ENCODE measurements at regions of chr2 and their contacts with region 1.

Region 1: GRCh38 chr2:182729710-182730339 is 13.8 kb downstream of the DNAJC10 start:
- DNase-seq: no peak
- ATAC-seq: no peak
- H3K4me3 ChIP-seq: no peak overlapping the region
- H3K4me3 Mint-ChIP-seq: no peak overlapping the region
- H3K27ac ChIP-seq: no peak overlapping the region
- H3K27ac Mint-ChIP-seq: no peak overlapping the region
- H3K4me1 ChIP-seq: no peaks in the 10 kb centered on the region
- H3K4me1 Mint-ChIP-seq: peaks cover 2 to 13% (median 2%) of the 10 kb centered on the region in 3 donors
- H3K27me3 ChIP-seq: no peaks in the 10 kb centered on the region
- H3K27me3 Mint-ChIP-seq: no peaks in the 10 kb centered on the region

Region 2: DNA sequence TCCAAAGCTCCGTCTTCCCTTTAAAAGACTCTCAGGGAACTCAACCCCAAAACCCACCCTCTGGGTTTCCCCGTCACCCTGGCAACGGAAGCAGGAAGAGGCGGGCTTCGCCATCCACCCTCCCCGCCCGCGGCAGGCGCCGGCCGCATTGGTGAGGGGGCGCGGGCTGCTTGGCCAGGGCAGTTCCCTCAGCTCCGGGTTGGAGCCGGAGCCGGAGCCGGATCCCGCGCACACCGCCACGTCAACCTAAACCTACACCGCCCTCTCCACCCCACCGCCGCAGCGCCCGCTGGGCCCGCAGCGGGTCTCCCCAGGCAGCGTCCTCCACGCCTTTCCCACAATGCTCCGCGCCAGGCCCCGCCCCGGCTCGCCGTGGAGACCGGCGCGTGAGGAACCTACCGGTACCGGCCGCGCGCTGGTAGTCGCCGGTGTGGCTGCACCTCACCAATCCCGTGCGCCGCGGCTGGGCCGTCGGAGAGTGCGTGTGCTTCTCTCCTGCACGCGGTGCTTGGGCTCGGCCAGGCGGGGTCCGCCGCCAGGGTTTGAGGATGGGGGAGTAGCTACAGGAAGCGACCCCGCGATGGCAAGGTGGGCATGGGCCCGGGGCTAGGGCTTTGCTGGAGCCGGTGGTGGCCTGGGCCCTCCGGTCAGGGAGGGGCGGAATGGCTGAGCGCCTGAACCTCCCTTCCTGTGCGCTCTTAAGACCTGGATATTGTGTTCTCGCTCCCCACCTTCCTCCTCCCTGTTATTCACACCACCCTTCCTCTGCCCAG is 13.7 kb before region 1 on chr2 and contains the start of gene DNAJC10:
- CTCF ChIA-PET with region 1: interaction called in 1 of 2 experiments, 4 read pairs
- POLR2A ChIA-PET with region 1: interaction called in 1 of 2 experiments, 15 read pairs
- DNase-seq: peak; percentile 68 to 89 (median 81)
- ATAC-seq: peak; percentile 89 to 92 (median 91)
- H3K4me3 ChIP-seq: peak within 1 kb of the TSS; percentile 78 to 79
- H3K4me3 Mint-ChIP-seq: no peak within 1 kb of the TSS
- H3K27ac ChIP-seq: peak within 1 kb of the TSS; percentile 59
- H3K27ac Mint-ChIP-seq: no peak within 1 kb of the TSS
- H3K4me1 ChIP-seq: peaks cover 3 to 16% of the 10 kb centered on the region in 2 experiments
- H3K4me1 Mint-ChIP-seq: peaks cover 0 to 11% (median 2%) of the 10 kb centered on the region in 3 donors
- H3K27me3 ChIP-seq: no peaks in the 10 kb centered on the region
- H3K27me3 Mint-ChIP-seq: peaks cover under 1% of the 10 kb centered on the region in 2 donors
- total RNA-seq, gene DNAJC10: 39.5 to 52.9 (median 46.1) TPM